ENCODE measurements at regions of chr12 and their contacts with region 1.

Region 1: GRCh38 chr12:42097971-42098370 is 46.7 kb downstream of the GXYLT1 start:
- DNase-seq: no peak
- H3K4me3 ChIP-seq: no peak overlapping the region
- H3K27ac ChIP-seq: no peak overlapping the region
- H3K4me1 ChIP-seq: no peaks in the 10 kb centered on the region
- H3K27me3 ChIP-seq: no peaks in the 10 kb centered on the region
- CTCF ChIP-seq: no peak

Region 2: GRCh38 chr12:40970320-40970907 is 1127.6 kb before region 1 on chr12:
- CTCF ChIA-PET with region 1: no interaction called
- POLR2A ChIA-PET with region 1: no interaction called
- intact Hi-C with region 1: loop called (anchors 10 kb)
- DNase-seq: peak; percentile 70
- H3K4me3 ChIP-seq: no peak overlapping the region
- H3K27ac ChIP-seq: no peak overlapping the region
- H3K4me1 ChIP-seq: peaks cover 17% of the 10 kb centered on the region
- H3K27me3 ChIP-seq: no peaks in the 10 kb centered on the region
- CTCF ChIP-seq: peak; percentile 68

Region 3: GRCh38 chr12:41795910-41796309 is 302.1 kb before region 1 on chr12:
- CTCF ChIA-PET with region 1: no interaction called
- POLR2A ChIA-PET with region 1: no interaction called
- intact Hi-C with region 1: loop called (anchors 10 kb)
- DNase-seq: peak; percentile 52
- H3K4me3 ChIP-seq: no peak overlapping the region
- H3K27ac ChIP-seq: peak overlapping the region; percentile 82
- H3K4me1 ChIP-seq: peaks cover 42% of the 10 kb centered on the region
- H3K27me3 ChIP-seq: no peaks in the 10 kb centered on the region
- CTCF ChIP-seq: peak; percentile 54

Region 4: DNA sequence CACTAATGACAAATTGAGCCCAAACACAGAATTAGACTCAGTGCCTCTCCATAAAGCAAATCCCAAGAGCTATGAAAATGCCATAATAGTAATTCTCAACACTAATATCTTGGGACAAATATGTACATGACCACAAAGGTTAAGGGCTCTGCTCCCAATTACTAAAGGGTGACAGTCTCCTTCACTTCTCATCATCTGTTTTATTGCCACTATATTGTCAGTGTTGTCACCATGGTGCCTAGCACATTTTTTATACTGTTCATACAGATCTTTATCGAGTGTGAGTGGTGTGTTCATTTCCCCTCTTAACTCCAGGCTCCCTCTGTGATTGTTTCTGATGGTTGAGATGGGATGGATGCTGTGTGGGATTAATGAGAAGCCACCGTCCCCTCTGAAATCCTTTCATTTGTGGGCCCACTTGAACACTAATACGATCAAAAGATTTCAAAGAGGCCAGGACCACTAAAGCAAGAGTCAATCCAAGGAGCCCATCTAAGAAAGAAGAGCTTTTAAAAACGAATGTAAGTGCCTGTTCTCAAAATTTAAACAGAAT is 231.0 kb before region 1 on chr12:
- CTCF ChIA-PET with region 1: no interaction called
- POLR2A ChIA-PET with region 1: no interaction called
- intact Hi-C with region 1: no loop called
- DNase-seq: no peak
- H3K4me3 ChIP-seq: no peak overlapping the region
- H3K27ac ChIP-seq: no peak overlapping the region
- H3K4me1 ChIP-seq: no peaks in the 10 kb centered on the region
- H3K27me3 ChIP-seq: no peaks in the 10 kb centered on the region
- CTCF ChIP-seq: no peak